ENCODE measurements at regions of chr1 and their contacts with region 1.

Region 1: DNA sequence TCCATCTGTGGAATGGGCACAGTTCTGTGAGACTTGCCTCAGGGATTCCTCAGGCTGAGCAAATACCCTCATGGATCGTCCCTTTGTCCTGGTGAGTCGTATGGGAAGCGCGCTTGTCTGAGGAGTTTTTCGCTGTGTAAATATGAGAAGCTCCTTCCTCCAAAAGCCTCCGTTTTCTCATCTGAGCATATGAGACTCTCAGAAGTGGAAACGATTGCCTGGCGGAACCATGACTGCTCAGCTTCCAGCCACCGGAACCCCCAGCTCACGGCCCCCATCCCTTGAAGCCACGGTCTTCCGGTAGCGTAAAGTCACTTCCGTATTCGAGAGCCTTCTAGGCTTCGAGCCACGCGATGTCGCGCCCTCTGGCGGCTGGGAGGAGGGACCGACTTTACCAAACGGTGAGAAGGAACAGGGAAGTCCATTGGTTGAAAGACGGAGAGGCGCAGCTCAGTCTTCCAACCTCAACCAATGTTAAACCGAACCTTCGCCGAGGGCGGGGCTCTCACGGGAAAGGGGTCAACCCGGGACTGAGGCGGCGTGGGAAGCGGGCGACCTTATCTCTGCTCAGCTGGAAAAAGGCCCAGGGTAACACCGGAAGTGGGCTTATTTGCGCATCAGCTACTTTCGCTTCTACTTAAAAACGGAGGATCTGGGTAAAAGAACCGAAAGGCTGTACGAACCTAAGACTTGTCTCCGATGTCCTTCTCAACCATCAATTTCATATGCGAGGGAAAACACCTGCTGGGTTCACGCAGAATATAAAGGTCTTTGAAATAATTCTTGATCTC is 46.2 kb downstream of the AZIN2 start:
- DNase-seq: peak; percentile 93
- ATAC-seq: peak; percentile 98
- H3K4me3 Mint-ChIP-seq: peak overlapping the region; percentile 93
- H3K27ac Mint-ChIP-seq: peak overlapping the region; percentile 92
- H3K4me1 Mint-ChIP-seq: peaks cover 25% of the 10 kb centered on the region
- H3K27me3 Mint-ChIP-seq: no peaks in the 10 kb centered on the region
- CTCF ChIP-seq: no peak

Region 2: DNA sequence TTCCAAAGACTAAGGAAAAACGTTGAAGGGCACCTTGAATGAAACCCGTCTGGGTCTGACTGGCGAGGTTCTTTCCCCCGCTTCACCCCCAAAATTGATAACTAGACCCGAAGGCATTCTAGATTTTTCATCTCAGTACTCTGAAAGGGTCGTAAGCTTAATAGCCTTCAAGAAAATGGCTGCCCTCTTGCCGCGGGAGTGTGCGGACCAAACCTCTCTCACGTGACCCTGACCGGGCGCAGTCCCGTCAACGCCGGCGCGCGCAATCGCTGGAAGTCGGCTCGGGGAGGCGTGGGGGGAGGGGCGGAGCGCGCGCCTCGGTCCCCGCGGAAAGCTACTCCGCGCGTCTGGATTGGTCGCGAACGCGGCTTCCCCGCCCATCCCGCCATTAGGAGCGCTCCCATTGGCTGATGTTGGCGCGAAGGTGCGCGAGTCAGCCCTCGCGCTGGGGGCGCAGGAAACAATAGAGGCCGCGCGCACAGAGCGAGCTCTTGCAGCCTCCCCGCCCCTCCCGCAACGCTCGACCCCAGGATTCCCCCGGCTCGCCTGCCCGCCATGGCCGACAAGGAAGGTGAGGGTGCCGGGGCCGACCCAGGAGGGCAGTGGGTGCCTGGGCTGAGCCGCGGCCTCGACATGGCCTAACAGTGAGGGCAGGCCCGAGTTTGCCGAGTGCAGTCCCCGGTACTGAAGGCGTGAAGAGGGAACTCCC is 476.3 kb before region 1 on chr1 and contains the start of gene RBBP4:
- CTCF ChIA-PET with region 1: no interaction called
- POLR2A ChIA-PET with region 1: interaction called, 11 read pairs
- intact Hi-C with region 1: loop called (anchors 1 kb)
- DNase-seq: peak; percentile 99
- ATAC-seq: peak; percentile 82
- H3K4me3 Mint-ChIP-seq: peak within 1 kb of the TSS; percentile 97
- H3K27ac Mint-ChIP-seq: peak within 1 kb of the TSS; percentile 100
- H3K4me1 Mint-ChIP-seq: peaks cover 70% of the 10 kb centered on the region
- H3K27me3 Mint-ChIP-seq: no peaks in the 10 kb centered on the region
- CTCF ChIP-seq: no peak
- total RNA-seq, gene RBBP4: 228 and 241 TPM in 2 replicates

Region 3: GRCh38 chr1:32981003-32981901 is 145.9 kb before region 1 on chr1:
- CTCF ChIA-PET with region 1: no interaction called
- POLR2A ChIA-PET with region 1: interaction called, 4 read pairs
- intact Hi-C with region 1: loop called (anchors 1 kb)
- DNase-seq: peak; percentile 46
- ATAC-seq: peak; percentile 93
- H3K4me3 Mint-ChIP-seq: peak overlapping the region; percentile 68
- H3K27ac Mint-ChIP-seq: peak overlapping the region; percentile 89
- H3K4me1 Mint-ChIP-seq: peaks cover 55% of the 10 kb centered on the region
- H3K27me3 Mint-ChIP-seq: no peaks in the 10 kb centered on the region
- CTCF ChIP-seq: no peak

Region 4: DNA sequence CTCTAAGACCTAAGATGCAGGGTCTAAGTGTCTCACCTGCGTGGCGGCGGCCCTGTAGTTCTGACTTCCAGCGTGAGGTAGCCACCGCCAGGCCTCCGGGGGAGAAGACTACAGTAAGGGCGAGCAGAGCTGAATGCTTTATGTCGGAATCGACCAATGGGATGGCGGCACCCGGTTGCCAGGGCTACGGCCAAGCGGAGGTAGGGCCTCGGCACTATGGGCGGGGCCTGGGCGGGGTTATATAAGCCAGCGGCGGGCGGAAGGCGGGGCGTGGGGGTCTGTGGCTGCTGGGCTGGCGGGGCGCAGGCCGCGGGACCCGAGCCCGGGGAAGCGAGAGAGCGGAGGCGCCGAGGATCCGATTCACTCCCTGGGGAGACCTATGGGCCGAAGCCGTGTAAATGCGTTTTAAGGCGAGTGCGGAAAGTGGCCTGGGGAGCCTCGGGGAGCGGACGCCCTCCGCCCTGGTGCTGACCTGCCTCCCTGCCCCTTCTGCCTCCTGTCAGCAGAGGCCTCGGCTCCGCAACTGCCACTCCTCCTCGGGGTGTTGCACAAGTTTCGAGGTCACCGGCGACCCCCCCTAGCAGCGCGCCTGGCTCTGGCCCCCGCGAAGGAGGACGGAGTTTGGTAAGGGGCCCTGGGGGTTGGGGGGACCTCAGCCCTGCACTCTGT is 46.2 kb before region 1 on chr1 and contains the start of gene AZIN2:
- CTCF ChIA-PET with region 1: no interaction called
- POLR2A ChIA-PET with region 1: interaction called, 9 read pairs
- intact Hi-C with region 1: loop called (anchors 1 kb)
- DNase-seq: peak; percentile 94
- ATAC-seq: peak; percentile 99
- H3K4me3 Mint-ChIP-seq: peak within 1 kb of the TSS; percentile 82
- H3K27ac Mint-ChIP-seq: no peak within 1 kb of the TSS
- H3K4me1 Mint-ChIP-seq: peaks cover 17% of the 10 kb centered on the region
- H3K27me3 Mint-ChIP-seq: peaks cover 3% of the 10 kb centered on the region
- CTCF ChIP-seq: no peak
- total RNA-seq, gene AZIN2: 0.82 and 0.93 TPM in 2 replicates

Region 5: GRCh38 chr1:33256701-33257399 is 129.7 kb after region 1 on chr1:
- CTCF ChIA-PET with region 1: no interaction called
- POLR2A ChIA-PET with region 1: interaction called, 9 read pairs
- intact Hi-C with region 1: loop called (anchors 1 kb)
- DNase-seq: no peak
- ATAC-seq: peak; percentile 60
- H3K4me3 Mint-ChIP-seq: peak overlapping the region; percentile 97
- H3K27ac Mint-ChIP-seq: peak overlapping the region; percentile 95
- H3K4me1 Mint-ChIP-seq: peaks cover 34% of the 10 kb centered on the region
- H3K27me3 Mint-ChIP-seq: no peaks in the 10 kb centered on the region
- CTCF ChIP-seq: no peak

Measured in activated B cell treated with CpG ODN at 0.5 μM for 24 hours (primary cell).